ENCODE measurements at regions of chr11 and their contacts with region 1.

Region 1: GRCh38 chr11:60775420-60775961 is 9.6 kb upstream of the MS4A10 start:
- DNase-seq: peak; percentile 80
- ATAC-seq: peak; percentile 91
- H3K4me3 ChIP-seq: no peak overlapping the region
- H3K27ac ChIP-seq: no peak overlapping the region
- H3K4me1 ChIP-seq: no peaks in the 10 kb centered on the region
- H3K27me3 ChIP-seq: no peaks in the 10 kb centered on the region
- CTCF ChIP-seq: peak; percentile 96

Region 2: DNA sequence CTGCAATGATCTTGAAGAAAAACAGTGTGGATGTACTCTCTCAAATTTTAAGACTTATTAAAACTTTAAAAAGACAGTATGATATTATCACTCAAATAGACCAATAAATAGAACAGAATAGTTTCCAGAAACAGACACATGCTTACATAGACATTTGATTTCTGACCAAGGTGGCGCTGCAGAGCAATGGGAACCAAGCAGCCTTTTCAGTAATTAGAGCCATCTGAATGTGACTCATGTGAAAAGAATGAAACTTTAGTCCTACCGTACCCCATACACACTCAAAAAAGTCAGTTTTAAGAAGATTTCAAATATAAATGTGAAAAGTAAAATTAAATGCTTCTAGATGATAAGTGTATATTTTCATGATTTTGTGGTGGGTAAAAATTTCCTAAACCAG is 150.2 kb before region 1 on chr11:
- CTCF ChIA-PET with region 1: no interaction called
- POLR2A ChIA-PET with region 1: no interaction called
- in situ Hi-C with region 1: no loop called
- intact Hi-C with region 1: no loop called
- DNase-seq: no peak
- ATAC-seq: no peak
- H3K4me3 ChIP-seq: no peak overlapping the region
- H3K27ac ChIP-seq: no peak overlapping the region
- H3K4me1 ChIP-seq: no peaks in the 10 kb centered on the region
- H3K27me3 ChIP-seq: no peaks in the 10 kb centered on the region
- CTCF ChIP-seq: no peak; the same call in 1 of the 2 replicates

Region 3: DNA sequence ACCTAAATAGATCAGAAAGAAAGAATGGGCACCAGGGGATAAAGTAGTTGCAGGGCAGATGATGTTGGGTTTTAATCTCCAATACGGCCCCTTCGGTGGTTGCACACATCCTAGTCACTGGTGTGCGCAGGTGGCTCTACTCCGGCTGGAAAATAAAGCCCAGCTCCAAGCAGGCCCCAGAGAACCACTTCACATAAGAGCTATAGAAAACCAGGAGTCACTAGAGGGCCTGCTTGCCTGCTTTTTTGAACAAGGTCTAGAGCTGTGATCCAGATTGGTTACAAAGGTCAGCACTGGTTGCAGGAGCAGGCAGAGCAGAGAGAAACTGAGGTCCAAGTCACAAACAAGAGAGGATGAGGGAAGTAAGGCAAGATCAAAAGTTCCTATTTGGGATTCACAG is 117.6 kb before region 1 on chr11:
- CTCF ChIA-PET with region 1: no interaction called
- POLR2A ChIA-PET with region 1: no interaction called
- in situ Hi-C with region 1: no loop called
- intact Hi-C with region 1: no loop called
- DNase-seq: no peak
- ATAC-seq: no peak
- H3K4me3 ChIP-seq: no peak overlapping the region
- H3K27ac ChIP-seq: no peak overlapping the region
- H3K4me1 ChIP-seq: no peaks in the 10 kb centered on the region
- H3K27me3 ChIP-seq: 0 out of 2 replicates have a peak, but pooled peaks cover 2% of the 10 kb centered on the region
- CTCF ChIP-seq: peak; percentile 23

Region 4: DNA sequence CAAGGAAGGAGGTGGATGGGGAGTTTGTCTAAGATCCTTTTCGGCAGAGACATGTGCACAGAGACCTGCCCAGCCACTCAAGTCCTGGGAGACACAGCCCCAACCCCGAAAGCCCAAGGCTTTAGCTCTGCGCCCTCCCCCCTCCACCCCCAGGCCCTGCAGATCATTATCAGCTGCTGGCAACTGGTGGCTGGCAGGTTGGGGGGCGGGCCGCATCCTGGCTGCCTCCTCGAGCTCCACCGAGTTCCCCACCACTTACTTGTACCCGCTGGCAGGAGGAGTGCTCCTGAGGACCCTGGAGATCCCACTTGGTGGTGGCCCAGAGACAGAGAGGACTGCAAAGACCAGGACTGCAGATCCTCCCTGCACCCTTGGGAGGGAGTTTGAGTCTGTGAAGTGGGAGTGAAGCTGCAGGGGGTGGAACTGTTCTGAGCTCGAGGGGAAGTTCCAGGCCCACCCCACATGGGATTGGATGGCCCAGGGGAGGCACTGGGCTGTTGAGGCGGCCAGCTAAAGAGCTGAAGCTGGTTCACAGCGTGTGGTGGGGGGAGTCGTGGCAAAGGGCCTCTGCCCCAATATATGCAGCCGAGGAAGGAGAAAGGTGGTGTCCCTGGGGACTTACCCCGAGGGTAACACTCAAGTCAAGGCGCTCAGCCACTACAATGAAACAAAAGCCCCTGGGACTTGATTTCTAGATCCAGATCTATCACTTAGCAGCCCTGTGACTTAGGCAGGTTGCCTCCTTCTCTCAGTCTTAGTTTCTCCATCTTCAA is 46.5 kb after region 1 on chr11:
- CTCF ChIA-PET with region 1: no interaction called
- POLR2A ChIA-PET with region 1: no interaction called
- in situ Hi-C with region 1: no loop called
- intact Hi-C with region 1: loop called (anchors 5 kb)
- DNase-seq: no peak
- ATAC-seq: no peak
- H3K4me3 ChIP-seq: no peak overlapping the region
- H3K27ac ChIP-seq: no peak overlapping the region
- H3K4me1 ChIP-seq: no peaks in the 10 kb centered on the region
- H3K27me3 ChIP-seq: no peaks in the 10 kb centered on the region
- CTCF ChIP-seq: no peak